Activated CD4-positive, alpha-beta T cell treated with anti-CD3 and anti-CD28 coated beads, Interleukin-2, amount 10 ng/mL, durations not matched to agents 24 days and 14 days (primary cell): ENCODE measurements at regions of chr15 and their contacts with region 1.

Region 1: GRCh38 chr15:38610748-38611147 is 46.1 kb upstream of the RASGRP1 start:
- DNase-seq: peak; percentile 79
- H3K4me3 Mint-ChIP-seq: peak overlapping the region; percentile 79
- H3K27ac Mint-ChIP-seq: peak overlapping the region; percentile 96
- H3K4me1 Mint-ChIP-seq: peaks cover 79% of the 10 kb centered on the region
- H3K27me3 Mint-ChIP-seq: no peaks in the 10 kb centered on the region

Region 2: GRCh38 chr15:38486936-38487335 is 123.8 kb before region 1 on chr15:
- intact Hi-C with region 1: loop called (anchors 2 kb)
- DNase-seq: peak; percentile 53
- H3K4me3 Mint-ChIP-seq: peak overlapping the region; percentile 66
- H3K27ac Mint-ChIP-seq: peak overlapping the region; percentile 91
- H3K4me1 Mint-ChIP-seq: peaks cover 30% of the 10 kb centered on the region
- H3K27me3 Mint-ChIP-seq: no peaks in the 10 kb centered on the region

Region 3: GRCh38 chr15:38593524-38593923 is 17.2 kb before region 1 on chr15:
- intact Hi-C with region 1: no loop called
- DNase-seq: no peak
- H3K4me3 Mint-ChIP-seq: no peak overlapping the region
- H3K27ac Mint-ChIP-seq: no peak overlapping the region
- H3K4me1 Mint-ChIP-seq: peaks cover 17% of the 10 kb centered on the region
- H3K27me3 Mint-ChIP-seq: no peaks in the 10 kb centered on the region

Region 4: DNA sequence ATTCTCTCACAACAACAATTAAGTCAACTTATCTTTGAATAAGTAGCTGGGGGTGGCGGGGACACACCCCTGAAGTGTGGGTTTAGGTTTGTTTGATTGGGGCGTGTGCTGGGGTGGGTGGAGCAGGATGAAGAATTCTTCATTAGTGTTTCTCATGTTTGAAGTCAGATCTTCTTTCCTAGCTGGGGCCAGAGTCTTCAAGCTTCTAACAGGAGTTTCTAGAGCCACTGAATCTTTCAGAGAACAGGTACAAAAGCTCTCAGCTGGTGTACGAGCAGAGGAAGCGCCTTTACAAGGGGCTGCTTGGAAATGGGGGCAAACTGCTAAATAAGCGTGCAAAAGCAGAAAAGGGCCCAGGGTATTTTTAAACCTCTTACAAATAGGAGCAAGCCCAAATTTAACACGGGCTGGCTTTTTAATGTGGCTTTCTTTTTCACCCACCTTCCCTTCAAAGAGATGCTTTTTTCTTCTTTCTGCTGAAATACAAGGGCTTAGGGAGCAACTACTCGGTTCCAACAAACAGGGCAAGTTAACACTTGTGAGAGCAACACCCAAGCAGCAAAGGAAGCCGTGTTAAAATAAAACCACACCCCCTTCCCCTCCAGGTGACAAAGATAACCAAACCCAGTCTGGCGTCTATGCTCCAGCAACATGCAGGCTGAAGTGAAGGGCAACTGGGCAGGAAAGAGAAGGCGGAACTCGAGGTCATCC is 40.7 kb after region 1 on chr15:
- intact Hi-C with region 1: loop called (anchors 1 kb)
- DNase-seq: peak; percentile 89
- H3K4me3 Mint-ChIP-seq: peak overlapping the region; percentile 82
- H3K27ac Mint-ChIP-seq: peak overlapping the region; percentile 90
- H3K4me1 Mint-ChIP-seq: peaks cover 76% of the 10 kb centered on the region
- H3K27me3 Mint-ChIP-seq: no peaks in the 10 kb centered on the region

Region 5: DNA sequence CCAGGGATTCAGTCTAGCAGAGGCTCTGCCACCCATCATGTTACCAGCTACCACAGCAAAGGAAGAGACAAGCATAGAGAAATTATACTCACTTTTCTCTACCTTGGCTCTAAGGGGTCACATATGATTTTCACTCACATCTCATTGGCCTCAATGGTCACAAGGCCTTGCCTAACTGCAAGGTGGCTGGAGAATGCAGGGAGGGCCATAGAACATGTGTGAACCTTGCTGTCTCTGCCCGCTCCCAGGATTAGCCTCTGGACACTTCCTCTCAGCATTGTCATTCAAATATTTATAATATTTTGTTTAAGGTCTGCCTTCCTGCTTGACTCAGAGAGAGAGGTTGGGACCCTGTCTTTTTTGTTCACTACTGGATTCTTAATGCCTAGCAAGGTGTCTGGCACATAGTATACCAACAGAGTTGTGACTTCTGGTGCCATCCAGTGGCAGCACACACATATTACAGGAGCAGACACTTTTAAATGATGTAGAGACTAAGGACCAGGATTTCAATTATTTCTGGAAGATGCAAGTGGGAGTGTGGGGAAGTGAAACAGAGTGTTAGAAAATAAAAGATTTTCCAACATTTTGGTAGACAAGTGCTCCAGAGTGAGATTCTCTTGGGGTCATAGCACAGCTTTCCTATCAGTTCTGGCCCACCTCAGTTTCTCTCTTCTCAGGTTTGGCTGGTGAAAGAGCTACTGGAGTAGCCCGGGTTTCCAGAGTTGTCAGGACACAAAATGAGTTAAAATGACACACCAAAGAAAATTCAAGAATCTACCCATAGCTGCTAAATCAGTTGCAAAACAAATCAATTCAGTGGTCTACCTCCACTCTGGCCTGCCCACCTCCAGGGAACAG is 72.9 kb after region 1 on chr15:
- intact Hi-C with region 1: loop called (anchors 1 kb)
- DNase-seq: peak; percentile 91
- H3K4me3 Mint-ChIP-seq: peak overlapping the region; percentile 55
- H3K27ac Mint-ChIP-seq: peak overlapping the region; percentile 97
- H3K4me1 Mint-ChIP-seq: peaks cover 73% of the 10 kb centered on the region
- H3K27me3 Mint-ChIP-seq: no peaks in the 10 kb centered on the region

Region 6: GRCh38 chr15:39624806-39625205 is 1014.1 kb after region 1 on chr15:
- intact Hi-C with region 1: loop called (anchors 10 kb)
- DNase-seq: peak; percentile 90
- H3K4me3 Mint-ChIP-seq: peak overlapping the region; percentile 76
- H3K27ac Mint-ChIP-seq: peak overlapping the region; percentile 99
- H3K4me1 Mint-ChIP-seq: peaks cover 76% of the 10 kb centered on the region
- H3K27me3 Mint-ChIP-seq: no peaks in the 10 kb centered on the region